ENCODE measurements at regions of chr6 and their contacts with region 1.

Region 1: GRCh38 chr6:137094411-137095008 is 49.7 kb upstream of the IL20RA start:
- DNase-seq: peak; percentile 60 to 71
- H3K4me3 ChIP-seq: no peak overlapping the region
- H3K4me3 Mint-ChIP-seq: no peak overlapping the region
- H3K27ac Mint-ChIP-seq: no peak overlapping the region
- H3K4me1 ChIP-seq: peaks cover 6% of the 10 kb centered on the region; the same call in 1 of the 2 replicates
- H3K4me1 Mint-ChIP-seq: no peaks in the 10 kb centered on the region
- H3K27me3 ChIP-seq: no peaks in the 10 kb centered on the region
- H3K27me3 Mint-ChIP-seq: no peaks in the 10 kb centered on the region
- CTCF ChIP-seq: peak; percentile 69 to 79

Region 2: DNA sequence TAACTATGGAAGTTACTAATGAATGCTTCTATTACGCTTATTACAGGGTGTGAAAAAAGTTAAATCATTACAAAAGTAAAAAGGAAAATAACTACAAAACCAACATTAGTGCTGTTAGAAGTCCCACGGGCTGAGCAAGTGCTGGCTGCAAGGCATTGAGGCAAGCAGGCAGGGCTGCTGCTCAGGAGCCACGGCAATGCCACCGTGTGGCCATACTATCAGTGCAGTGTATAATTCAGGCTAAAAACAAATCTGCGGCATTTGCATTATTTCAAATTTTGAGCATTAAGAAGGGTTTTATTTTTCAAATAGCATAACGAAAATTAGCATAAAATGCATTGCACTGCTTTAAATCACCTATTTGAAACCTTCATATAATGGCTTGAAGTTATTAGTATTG is 107.6 kb after region 1 on chr6:
- CTCF ChIA-PET with region 1: no interaction called
- POLR2A ChIA-PET with region 1: no interaction called
- intact Hi-C with region 1: loop called (anchors 1 kb)
- DNase-seq: no peak
- H3K4me3 ChIP-seq: no peak overlapping the region
- H3K4me3 Mint-ChIP-seq: no peak overlapping the region
- H3K27ac Mint-ChIP-seq: no peak overlapping the region
- H3K4me1 ChIP-seq: peaks cover 5% of the 10 kb centered on the region; the same call in 1 of the 2 replicates
- H3K4me1 Mint-ChIP-seq: no peaks in the 10 kb centered on the region
- H3K27me3 ChIP-seq: no peaks in the 10 kb centered on the region
- H3K27me3 Mint-ChIP-seq: no peaks in the 10 kb centered on the region
- CTCF ChIP-seq: no peak

Region 3: DNA sequence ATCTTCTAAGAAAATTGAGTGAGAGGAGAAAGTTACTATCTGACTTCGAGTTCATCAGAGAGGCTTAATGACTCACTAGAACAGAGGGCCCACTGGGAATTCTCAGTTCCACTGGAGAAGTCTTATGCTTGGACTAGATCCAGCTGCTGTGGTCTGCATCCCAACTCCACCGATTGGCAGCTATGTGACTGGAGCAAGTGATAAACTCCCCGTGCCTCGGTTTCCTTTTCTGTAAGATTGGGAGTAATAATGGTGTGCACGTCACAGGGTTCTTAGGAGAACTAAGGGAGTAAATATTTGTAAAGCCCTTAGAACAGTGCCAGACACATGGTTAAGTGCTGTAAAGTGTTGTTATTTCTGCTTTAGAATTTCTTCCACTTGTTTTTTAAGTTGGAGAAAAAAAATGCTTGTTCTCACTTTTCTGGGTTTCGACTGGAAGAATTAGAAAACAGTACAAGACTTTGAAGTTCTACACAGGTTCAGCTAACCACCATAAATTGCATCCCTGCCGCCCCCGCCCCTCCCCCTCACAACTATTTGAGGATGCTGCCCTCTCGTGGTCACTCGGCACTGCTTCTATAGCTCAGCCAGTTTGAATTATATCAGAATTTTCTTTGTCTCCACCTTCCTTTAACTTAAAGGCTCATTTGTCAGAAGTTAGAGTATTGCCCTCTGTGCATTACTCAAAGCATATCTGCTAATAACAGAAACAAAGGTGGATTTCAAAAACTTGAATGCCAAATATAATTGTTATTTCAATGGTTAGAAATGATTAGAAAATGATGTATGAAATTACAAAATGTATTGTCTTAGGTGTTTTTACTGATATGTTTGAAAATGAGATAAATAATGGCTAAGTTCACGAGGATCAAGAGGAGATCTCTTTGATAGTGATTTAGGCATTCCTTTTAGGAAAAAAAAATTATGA is 219.7 kb after region 1 on chr6:
- CTCF ChIA-PET with region 1: interaction called, 31 read pairs
- POLR2A ChIA-PET with region 1: no interaction called
- intact Hi-C with region 1: loop called (anchors 1 kb)
- DNase-seq: peak; percentile 60 to 62
- H3K4me3 ChIP-seq: no peak overlapping the region
- H3K4me3 Mint-ChIP-seq: no peak overlapping the region
- H3K27ac Mint-ChIP-seq: no peak overlapping the region
- H3K4me1 ChIP-seq: no peaks in the 10 kb centered on the region; the same call in 1 of the 2 replicates
- H3K4me1 Mint-ChIP-seq: no peaks in the 10 kb centered on the region
- H3K27me3 ChIP-seq: no peaks in the 10 kb centered on the region
- H3K27me3 Mint-ChIP-seq: no peaks in the 10 kb centered on the region
- CTCF ChIP-seq: peak; percentile 78

Region 4: DNA sequence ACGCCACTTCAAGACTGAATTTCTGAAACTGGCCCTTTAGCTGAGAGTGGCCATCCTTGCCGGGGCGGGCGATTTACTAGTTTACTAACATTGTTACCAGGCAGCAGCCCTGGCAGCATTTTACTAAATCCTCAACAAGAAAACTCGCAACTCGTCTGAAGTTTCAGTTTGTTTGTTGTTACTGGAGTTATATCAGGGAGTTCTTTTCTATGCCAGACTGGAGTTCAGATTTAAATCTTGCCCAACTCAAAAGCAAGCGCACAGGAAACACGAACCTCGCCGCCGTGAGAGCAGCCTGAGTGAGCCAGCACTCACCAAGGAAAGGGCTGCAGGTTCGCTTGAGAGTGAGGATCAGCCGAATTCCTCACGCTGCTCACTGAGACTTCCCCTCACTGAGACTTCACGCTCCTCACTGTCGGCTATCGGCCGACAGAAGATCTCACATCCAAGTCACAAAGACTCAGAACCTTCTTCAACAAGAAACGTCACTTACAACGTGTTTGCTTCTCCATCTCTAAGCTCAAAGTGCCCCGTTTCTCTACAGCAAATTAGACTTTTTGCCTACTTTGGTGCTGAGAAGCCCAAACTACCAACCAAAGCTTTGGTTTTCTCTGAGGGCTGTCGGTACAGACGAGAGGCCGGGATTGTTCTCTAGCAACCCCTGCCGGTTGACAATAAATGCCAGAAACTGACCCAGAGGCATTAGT is 320.8 kb after region 1 on chr6:
- CTCF ChIA-PET with region 1: no interaction called
- POLR2A ChIA-PET with region 1: no interaction called
- intact Hi-C with region 1: loop called (anchors 5 kb)
- DNase-seq: peak; percentile 39 to 57
- H3K4me3 ChIP-seq: peak overlapping the region; percentile 2; the same call in 1 of the 2 replicates
- H3K4me3 Mint-ChIP-seq: peak overlapping the region; percentile 70
- H3K27ac Mint-ChIP-seq: no peak overlapping the region
- H3K4me1 ChIP-seq: no peaks in the 10 kb centered on the region
- H3K4me1 Mint-ChIP-seq: no peaks in the 10 kb centered on the region
- H3K27me3 ChIP-seq: no peaks in the 10 kb centered on the region
- H3K27me3 Mint-ChIP-seq: no peaks in the 10 kb centered on the region
- CTCF ChIP-seq: peak in 1 of 2 experiments; percentile 43

Region 5: GRCh38 chr6:137571854-137572253 is 477.3 kb after region 1 on chr6:
- CTCF ChIA-PET with region 1: no interaction called
- POLR2A ChIA-PET with region 1: no interaction called
- intact Hi-C with region 1: loop called (anchors 10 kb)
- DNase-seq: peak; percentile 58 to 64
- H3K4me3 ChIP-seq: no peak overlapping the region
- H3K4me3 Mint-ChIP-seq: no peak overlapping the region
- H3K27ac Mint-ChIP-seq: no peak overlapping the region
- H3K4me1 ChIP-seq: no peaks in the 10 kb centered on the region
- H3K4me1 Mint-ChIP-seq: peaks cover 7% of the 10 kb centered on the region
- H3K27me3 ChIP-seq: no peaks in the 10 kb centered on the region
- H3K27me3 Mint-ChIP-seq: peaks cover 5% of the 10 kb centered on the region
- CTCF ChIP-seq: peak; percentile 58 to 63

Region 6: GRCh38 chr6:137641474-137642077 is 547.1 kb after region 1 on chr6:
- CTCF ChIA-PET with region 1: interaction called, 7 read pairs
- POLR2A ChIA-PET with region 1: no interaction called
- intact Hi-C with region 1: loop called (anchors 1 kb)
- DNase-seq: peak; percentile 67 to 69
- H3K4me3 ChIP-seq: no peak overlapping the region
- H3K4me3 Mint-ChIP-seq: no peak overlapping the region
- H3K27ac Mint-ChIP-seq: no peak overlapping the region
- H3K4me1 ChIP-seq: peaks cover 20% of the 10 kb centered on the region
- H3K4me1 Mint-ChIP-seq: peaks cover 4% of the 10 kb centered on the region
- H3K27me3 ChIP-seq: no peaks in the 10 kb centered on the region
- H3K27me3 Mint-ChIP-seq: no peaks in the 10 kb centered on the region
- CTCF ChIP-seq: peak; percentile 65 to 74

Region 7: GRCh38 chr6:137697267-137697938 is 602.9 kb after region 1 on chr6:
- CTCF ChIA-PET with region 1: interaction called, 5 read pairs
- POLR2A ChIA-PET with region 1: no interaction called
- intact Hi-C with region 1: loop called (anchors 5 kb)
- DNase-seq: peak; percentile 73 to 91
- H3K4me3 ChIP-seq: no peak overlapping the region
- H3K4me3 Mint-ChIP-seq: no peak overlapping the region
- H3K27ac Mint-ChIP-seq: peak overlapping the region; percentile 94
- H3K4me1 ChIP-seq: peaks cover 44% of the 10 kb centered on the region
- H3K4me1 Mint-ChIP-seq: peaks cover 27% of the 10 kb centered on the region
- H3K27me3 ChIP-seq: no peaks in the 10 kb centered on the region
- H3K27me3 Mint-ChIP-seq: no peaks in the 10 kb centered on the region
- CTCF ChIP-seq: peak; percentile 34 to 35

Measured in Caco-2 (cell line).